ENCODE measurements at regions of chr9 and their contacts with region 1.

Region 1: GRCh38 chr9:7045361-7045760 is 287.6 kb downstream of the KDM4C start:
- DNase-seq: no peak

Region 2: DNA sequence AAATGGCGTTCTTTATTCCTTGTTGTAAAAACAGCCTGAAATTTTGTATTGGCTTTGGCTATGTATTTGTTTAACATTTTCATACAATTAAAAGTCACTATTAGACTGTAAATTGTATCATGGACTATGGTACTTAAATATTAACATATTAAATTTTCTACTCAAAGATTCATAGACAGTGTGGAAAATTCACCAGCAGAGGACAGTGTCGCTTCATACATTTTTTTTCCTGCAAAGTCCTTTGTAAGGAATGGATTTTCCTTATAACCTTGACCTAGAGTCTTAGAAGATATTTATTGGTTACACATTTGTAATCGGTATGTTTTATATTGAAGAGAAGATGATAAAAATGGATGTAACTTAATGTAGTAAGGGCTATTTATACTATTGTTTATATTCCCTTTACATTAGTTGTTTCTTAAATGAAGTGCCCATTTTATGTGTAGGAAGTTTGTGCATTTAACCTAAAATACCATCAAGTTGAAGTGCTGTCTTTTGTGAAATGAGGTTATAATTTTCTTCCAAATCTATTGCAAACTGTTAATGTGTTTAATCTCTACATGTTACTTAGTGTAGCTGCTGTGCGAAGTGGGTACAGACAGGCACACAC is 137.5 kb before region 1 on chr9:
- intact Hi-C with region 1: loop called (anchors 5 kb)
- DNase-seq: no peak

Measured in cardiac septum (tissue), 1 donor.